Cardiac septum (tissue), 1 donor: ENCODE measurements at regions of chr15 and their contacts with region 1.

Region 1: GRCh38 chr15:95018888-95019545 is 787.7 kb downstream of the MCTP2 start:
- DNase-seq: no peak

Region 2: GRCh38 chr15:94403331-94403730 is 615.7 kb before region 1 on chr15:
- intact Hi-C with region 1: loop called (anchors 5 kb)
- DNase-seq: no peak

Region 3: DNA sequence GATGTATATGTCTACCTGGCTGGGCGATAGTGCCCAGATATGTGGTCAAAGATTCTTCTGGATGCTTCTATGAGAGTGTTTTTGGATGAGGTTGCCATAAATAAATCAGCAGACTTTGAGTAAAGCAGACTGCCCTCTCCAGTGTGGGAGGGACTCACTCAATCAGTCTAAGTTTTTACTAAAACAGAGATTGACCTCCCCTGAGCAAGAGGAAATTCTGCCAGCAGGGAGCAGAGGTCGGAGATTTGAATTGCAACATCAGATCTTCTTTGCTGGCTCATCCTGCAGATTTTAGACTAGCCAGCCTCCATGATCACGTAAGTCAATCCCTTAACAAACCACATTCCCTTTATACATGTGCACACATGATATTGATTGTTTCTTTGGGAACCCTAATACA is 486.8 kb before region 1 on chr15:
- intact Hi-C with region 1: no loop called
- DNase-seq: no peak

Region 4: DNA sequence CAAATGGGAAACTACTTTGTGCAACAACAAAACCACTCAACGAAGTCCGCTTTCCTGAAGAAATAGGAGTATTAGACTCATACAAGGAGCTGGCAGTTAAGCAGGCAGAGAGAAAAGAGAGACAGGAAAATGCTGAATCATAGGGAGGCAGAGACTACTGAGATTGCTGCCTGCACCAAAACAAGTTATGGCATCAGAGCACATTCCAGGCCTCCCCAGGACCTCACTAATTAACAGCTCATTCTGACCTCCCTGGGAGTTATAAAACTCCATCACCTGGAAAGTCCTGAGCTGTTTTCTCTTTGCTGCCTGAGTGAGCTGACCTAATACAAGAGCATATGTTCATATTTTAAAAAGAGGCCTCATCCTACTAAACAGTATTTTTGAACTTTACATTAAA is 46.7 kb before region 1 on chr15:
- intact Hi-C with region 1: no loop called
- DNase-seq: no peak

Region 5: DNA sequence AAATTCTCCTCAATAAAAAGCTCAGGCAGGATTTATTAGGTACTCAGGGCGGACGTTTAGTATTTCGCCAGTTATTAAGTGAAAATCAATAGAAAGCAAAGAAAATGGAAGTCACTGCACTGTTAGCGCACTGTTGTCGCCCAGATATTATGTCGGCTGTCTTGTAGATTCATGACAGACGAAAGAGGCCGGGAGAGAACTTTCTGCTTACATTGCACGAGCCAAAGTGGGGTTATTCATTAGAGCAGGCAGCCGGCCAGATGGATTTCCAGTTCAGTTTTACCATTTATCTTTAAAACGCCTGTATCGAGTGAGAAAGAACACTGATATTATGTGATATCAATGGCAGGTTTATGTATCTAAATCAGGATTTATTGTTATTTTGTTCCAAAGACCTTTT is 445.5 kb after region 1 on chr15:
- intact Hi-C with region 1: loop called (anchors 10 kb)
- DNase-seq: no peak